ENCODE measurements at regions of chr17 and their contacts with region 1.

Region 1: DNA sequence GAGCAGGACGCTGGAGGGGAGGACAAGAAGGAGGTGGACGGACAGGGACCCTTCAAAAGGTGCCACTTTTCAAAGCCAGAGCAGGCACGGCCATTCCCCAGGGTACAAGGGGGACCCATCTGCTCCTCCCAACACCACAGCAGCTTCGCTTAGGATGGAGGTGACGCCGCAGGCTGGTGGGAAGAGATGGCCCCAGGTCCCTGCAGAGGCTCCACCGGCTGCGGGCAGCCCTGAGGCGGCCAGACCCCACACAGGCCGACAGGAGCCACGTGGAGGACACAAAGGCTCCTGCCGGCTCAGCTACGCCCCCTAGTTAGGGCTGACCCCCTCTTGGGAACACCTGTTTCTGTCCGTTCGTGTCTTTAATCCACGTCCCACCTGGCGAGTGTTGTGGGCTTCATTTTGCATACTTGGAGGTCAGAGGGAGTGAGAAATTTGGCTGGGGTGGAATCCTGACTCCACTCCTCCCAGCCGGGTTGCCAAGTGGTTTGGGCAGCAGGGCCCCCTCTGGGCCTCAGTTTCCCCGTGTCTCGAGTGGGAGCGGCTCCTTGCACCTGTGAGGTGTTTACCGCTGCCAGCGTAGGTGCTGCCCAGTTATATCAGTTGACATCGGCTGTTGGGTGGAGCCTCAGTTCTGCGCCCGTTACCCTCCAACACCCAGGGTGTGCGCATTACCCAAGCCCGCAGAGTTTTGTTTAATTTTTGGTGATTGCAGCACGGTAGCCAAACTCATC is 5.8 kb upstream of the FN3KRP start:
- DNase-seq: peak in 1 of 2 experiments; percentile 63
- H3K4me3 ChIP-seq: no peak overlapping the region
- H3K27ac ChIP-seq: no peak overlapping the region
- H3K4me1 ChIP-seq: no peaks in the 10 kb centered on the region
- H3K27me3 ChIP-seq: 0 out of 7 replicates have a peak, but pooled peaks cover 0 to 2% (median 0%) of the 10 kb centered on the region in 4 experiments
- CTCF ChIP-seq: peak in 2 of 3 experiments; percentile 22; a peak in 2 of 4 replicates
- EP300 ChIP-seq: no peak
- POLR2A ChIP-seq: no peak
- RAD21 ChIP-seq: no peak

Region 2: DNA sequence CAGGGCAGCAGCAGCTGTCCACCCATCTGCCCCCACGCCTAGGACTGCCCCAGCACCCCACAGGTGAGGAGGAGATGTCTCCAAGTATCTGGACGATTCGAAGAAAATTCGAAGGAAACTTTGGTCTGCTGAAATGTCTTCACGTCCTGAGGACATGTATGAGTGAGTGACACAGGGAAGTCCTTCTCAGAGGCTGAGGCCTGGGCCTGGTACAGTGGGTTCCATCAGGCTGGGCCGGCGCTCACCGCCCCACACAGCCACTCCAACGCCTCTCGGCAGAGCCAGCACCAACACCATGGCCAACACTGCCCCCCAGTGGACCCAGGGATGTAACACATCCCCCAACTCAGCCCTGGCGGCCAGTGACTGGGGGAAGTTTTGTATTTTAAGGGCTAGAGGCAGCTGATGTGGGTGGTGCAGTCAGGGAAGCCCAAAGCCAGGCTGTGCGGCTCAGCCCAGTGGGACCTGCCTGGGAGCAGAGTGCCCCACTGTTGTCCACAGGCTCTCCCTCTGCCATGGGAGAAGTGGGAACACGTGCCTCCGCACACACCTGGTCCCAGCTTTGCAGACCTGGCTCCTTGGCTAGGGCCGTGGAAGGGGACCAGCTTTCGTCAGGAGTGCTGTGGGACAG is 556.8 kb before region 1 on chr17:
- CTCF ChIA-PET with region 1: no interaction called
- POLR2A ChIA-PET with region 1: no interaction called
- DNase-seq: peak; percentile 56 to 94
- H3K4me3 ChIP-seq: no peak overlapping the region
- H3K27ac ChIP-seq: no peak overlapping the region
- H3K4me1 ChIP-seq: no peaks in the 10 kb centered on the region
- H3K27me3 ChIP-seq: no peaks in the 10 kb centered on the region
- CTCF ChIP-seq: peak; percentile 95 to 99 (median 99)
- EP300 ChIP-seq: no peak
- POLR2A ChIP-seq: no peak
- RAD21 ChIP-seq: peak; percentile 98 to 100

Region 3: DNA sequence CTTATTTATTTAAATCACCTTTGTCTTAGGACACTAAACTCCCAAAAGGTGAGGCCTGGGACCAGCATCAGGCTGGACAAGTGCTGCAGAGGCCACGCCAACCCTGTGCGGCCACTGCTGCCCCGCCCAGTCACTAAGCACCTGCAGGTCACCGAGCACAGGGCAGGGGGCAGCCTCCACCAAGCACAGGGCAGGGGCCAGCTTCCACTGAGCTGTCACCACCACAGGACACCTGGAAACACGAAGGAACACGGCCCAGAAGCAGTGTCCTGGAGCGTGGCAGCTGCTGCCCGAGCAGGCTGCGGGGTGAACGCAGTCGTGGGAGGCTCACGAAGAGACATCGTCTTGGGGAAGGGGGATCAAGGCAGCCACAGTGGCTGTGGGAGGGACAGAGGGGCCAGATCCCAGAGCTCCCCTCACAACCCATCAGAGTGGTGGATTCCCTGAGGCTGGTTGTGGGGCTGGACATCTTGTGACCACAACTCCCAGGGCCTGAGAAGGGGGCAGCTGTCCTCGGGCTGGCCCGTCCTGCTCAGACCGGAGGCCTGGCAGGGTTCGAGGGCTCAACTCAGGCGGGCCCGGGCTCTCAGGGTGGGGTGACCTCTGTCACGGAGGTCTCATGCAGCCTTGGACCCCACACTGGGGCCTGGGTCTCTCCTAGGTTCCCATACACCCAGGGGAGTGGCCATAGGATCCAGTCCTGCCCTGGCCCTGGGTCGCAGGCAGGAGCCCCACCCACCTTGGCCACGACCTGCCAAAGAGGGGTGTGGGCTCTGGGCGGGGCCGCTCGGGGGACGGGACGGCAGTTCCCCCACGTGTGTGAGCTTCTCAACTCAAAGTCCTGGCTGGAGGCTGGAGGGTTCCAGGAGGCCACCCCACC is 30.8 kb before region 1 on chr17:
- CTCF ChIA-PET with region 1: interaction called, 17 read pairs
- POLR2A ChIA-PET with region 1: interaction called, 4 read pairs
- DNase-seq: no peak
- H3K4me3 ChIP-seq: no peak overlapping the region
- H3K27ac ChIP-seq: no peak overlapping the region
- H3K4me1 ChIP-seq: no peaks in the 10 kb centered on the region; a peak in 1 of 7 replicates
- H3K27me3 ChIP-seq: no peaks in the 10 kb centered on the region
- CTCF ChIP-seq: peak; percentile 61 to 70 (median 70)
- EP300 ChIP-seq: no peak
- POLR2A ChIP-seq: no peak
- RAD21 ChIP-seq: peak; percentile 74 to 79

Region 4: DNA sequence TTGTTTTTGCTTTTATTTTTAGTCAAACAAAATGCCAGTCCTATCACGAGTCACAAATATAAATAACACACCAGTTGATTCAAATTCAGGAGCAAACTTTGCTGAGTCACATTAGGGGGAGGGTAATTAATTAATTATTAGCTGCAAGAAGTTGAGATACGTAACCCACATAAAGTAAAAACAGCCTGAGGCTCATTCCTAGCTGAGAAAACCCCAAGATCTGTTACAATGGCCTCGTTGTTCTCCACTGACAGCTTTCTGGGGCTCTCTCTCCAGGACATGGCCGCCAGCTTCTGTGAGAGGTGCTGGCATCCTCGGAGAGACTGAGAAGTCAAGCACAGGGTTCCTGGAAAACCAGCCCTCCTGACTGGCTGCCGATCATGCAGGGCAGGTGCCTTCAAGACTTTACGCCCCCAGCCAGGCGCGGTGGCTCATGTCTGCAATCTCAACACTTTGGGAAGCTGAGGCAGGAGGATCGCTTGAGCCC is 23.2 kb before region 1 on chr17:
- CTCF ChIA-PET with region 1: interaction called, 15 read pairs
- POLR2A ChIA-PET with region 1: no interaction called
- DNase-seq: no peak
- H3K4me3 ChIP-seq: no peak overlapping the region
- H3K27ac ChIP-seq: no peak overlapping the region
- H3K4me1 ChIP-seq: no peaks in the 10 kb centered on the region; a peak in 1 of 7 replicates
- H3K27me3 ChIP-seq: no peaks in the 10 kb centered on the region; a peak in 1 of 7 replicates
- CTCF ChIP-seq: no peak
- EP300 ChIP-seq: no peak
- POLR2A ChIP-seq: no peak
- RAD21 ChIP-seq: no peak

Region 5: DNA sequence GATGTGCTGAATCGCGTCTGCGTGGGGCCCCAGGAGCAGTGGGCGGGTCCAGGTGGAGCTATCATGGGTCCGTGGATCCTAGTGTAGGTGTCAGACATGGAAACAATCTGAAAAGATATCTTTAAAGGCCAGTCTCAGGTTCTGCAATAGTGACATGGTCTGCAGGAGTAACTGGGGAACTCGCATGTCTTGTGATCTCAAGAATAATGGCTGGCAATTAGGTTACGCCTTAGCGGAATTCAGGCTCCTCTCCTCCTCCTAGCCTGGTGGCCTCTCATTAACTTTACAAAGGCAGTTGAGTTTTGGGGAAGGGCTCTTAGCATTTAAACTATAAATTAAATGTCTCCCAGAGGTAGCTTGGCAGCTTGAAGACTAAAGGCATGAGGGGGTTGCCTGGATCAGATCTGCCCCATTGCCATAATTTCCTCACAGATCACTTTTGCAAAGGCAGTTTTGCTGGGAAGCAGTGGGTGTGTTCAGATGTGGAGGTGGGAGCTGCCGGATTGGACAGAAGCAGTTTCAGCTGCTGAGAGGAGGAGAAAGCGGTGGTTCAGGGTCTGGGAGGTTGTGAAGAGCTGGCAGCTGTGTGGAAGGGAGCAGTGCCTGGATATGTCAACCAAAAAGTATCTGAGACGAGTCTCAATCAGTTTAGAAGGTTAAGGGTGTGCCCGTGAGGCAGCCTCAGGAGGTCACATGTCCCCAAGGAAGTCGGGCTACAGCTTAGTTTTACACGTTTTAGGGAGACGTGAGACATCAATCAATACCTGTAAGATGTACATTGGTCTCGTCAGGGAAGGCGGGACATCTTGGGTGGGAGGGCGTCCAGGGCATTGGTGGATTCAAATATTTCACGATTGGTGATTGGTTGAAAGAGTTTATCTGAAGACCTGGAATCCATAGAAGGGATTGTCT is 43.9 kb after region 1 on chr17:
- CTCF ChIA-PET with region 1: interaction called, 22 read pairs
- POLR2A ChIA-PET with region 1: interaction called, 7 read pairs
- DNase-seq: peak; percentile 61 to 68
- H3K4me3 ChIP-seq: peak overlapping the region; percentile 13 to 51 (median 24); a peak in 7 of 8 replicates
- H3K27ac ChIP-seq: peak overlapping the region; percentile 76
- H3K4me1 ChIP-seq: peaks cover 8 to 23% (median 16%) of the 10 kb centered on the region in 4 experiments
- H3K27me3 ChIP-seq: peaks cover 0 to 6% (median 3%) of the 10 kb centered on the region in 4 experiments; a peak in 3 of 7 replicates
- CTCF ChIP-seq: no peak
- EP300 ChIP-seq: no peak
- POLR2A ChIP-seq: no peak; a peak in 1 of 3 replicates
- RAD21 ChIP-seq: no peak

Region 6: GRCh38 chr17:82791532-82791931 is 80.9 kb after region 1 on chr17:
- CTCF ChIA-PET with region 1: no interaction called
- POLR2A ChIA-PET with region 1: no interaction called
- DNase-seq: no peak
- H3K4me3 ChIP-seq: no peak overlapping the region
- H3K27ac ChIP-seq: no peak overlapping the region
- H3K4me1 ChIP-seq: no peaks in the 10 kb centered on the region
- H3K27me3 ChIP-seq: no peaks in the 10 kb centered on the region
- CTCF ChIP-seq: no peak
- EP300 ChIP-seq: no peak
- POLR2A ChIP-seq: no peak
- RAD21 ChIP-seq: no peak

Region 7: DNA sequence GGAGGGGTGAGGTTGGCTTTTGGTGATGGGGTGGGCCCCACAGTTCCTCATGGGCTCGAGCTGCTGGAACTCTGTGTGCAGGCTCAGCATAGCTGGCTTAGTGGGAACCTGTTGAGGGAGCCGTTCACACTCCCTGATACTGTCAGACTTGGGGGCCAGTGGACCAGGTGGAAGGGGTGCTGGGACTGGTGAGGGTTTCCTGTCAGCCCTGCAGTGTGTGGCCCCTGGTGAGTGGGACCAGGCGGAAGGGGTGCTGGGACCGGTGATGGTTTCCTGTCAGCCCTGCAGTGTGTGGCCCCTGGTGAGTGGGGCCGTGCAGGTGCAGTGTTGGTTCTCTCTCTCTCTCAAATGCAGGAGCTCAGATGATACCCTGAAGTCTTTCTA is 174.3 kb after region 1 on chr17:
- CTCF ChIA-PET with region 1: no interaction called
- POLR2A ChIA-PET with region 1: no interaction called
- DNase-seq: no peak
- H3K4me3 ChIP-seq: no peak overlapping the region
- H3K27ac ChIP-seq: no peak overlapping the region
- H3K4me1 ChIP-seq: peaks cover 8 to 17% (median 11%) of the 10 kb centered on the region in 4 experiments; a peak in 6 of 7 replicates
- H3K27me3 ChIP-seq: no peaks in the 10 kb centered on the region
- CTCF ChIP-seq: no peak
- EP300 ChIP-seq: no peak
- POLR2A ChIP-seq: no peak
- RAD21 ChIP-seq: no peak